OCI-LY7 (cell line): ENCODE measurements at regions of chr5 and their contacts with region 1.

Region 1: DNA sequence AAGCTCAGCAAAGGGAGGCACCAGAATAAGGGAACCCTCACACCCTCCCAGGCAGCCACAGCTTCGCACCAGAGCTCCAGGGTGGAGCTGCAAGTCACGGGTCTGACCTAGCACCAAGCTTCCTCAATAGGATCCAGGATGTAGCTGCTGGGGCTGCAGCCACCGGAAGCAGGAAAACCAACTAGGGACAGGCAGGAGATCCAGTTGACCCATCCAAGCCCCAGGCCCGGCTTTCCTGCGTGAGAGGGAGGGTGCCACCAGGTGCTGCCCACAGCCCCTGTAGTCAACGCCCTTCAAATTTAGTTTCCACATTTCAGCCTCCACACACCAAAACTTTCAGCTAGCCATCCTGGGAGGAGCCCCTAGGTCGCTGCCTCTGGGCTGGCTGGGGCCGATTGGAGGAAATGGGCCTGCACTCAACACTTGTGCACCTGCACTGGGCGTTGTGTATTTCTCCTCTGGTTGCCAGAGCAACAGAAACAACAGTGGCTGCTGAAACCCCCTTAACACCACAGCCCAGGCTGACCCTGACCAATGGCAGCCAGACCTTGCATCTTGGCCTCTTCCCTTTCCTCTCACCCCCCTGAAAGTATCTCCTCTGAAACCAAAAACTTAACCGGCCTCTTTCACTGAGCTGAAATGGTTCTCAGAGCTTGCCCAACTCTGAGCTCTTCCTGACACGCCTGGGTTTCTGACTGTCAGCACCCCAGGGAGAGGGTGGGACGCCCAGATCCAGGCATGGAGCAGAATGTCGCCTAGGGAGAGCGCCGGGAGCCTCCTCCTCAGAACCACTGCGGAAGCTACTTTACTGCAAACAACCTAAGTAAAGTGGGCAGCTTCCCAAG is 226.5 kb upstream of the MAP3K1 start:
- DNase-seq: peak; percentile 93
- H3K4me3 ChIP-seq: peak overlapping the region; percentile 6
- H3K27ac ChIP-seq: peak overlapping the region; percentile 36
- H3K4me1 ChIP-seq: peaks cover 32% of the 10 kb centered on the region
- CTCF ChIP-seq: no peak

Region 2: GRCh38 chr5:55459572-55459971 is 1129.3 kb before region 1 on chr5:
- CTCF ChIA-PET with region 1: no interaction called
- POLR2A ChIA-PET with region 1: no interaction called
- intact Hi-C with region 1: no loop called
- DNase-seq: no peak
- H3K4me3 ChIP-seq: no peak overlapping the region
- H3K27ac ChIP-seq: no peak overlapping the region
- H3K4me1 ChIP-seq: no peaks in the 10 kb centered on the region
- CTCF ChIP-seq: no peak

Region 3: GRCh38 chr5:55829956-55830355 is 758.9 kb before region 1 on chr5:
- CTCF ChIA-PET with region 1: no interaction called
- POLR2A ChIA-PET with region 1: no interaction called
- intact Hi-C with region 1: no loop called
- DNase-seq: no peak
- H3K4me3 ChIP-seq: no peak overlapping the region
- H3K27ac ChIP-seq: no peak overlapping the region
- H3K4me1 ChIP-seq: no peaks in the 10 kb centered on the region
- CTCF ChIP-seq: no peak

Region 4: DNA sequence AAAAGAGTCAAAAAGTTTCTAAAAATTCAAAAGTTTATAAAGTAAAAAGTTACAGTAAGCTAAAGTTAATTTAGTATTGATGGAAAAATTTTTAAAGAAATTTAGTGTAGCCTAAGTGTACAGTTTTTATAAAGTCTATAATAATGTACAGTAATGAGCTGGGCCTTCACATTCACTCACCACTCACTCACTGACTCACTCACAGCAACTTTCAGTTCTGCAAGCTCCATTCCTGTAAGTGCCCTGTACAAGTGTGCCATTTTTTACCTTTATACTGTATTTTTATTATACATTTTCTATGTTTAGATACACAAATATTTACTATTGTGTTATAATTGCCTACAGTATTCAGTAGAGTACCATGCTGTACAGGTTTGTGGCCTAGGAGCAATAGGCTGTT is 13.0 kb before region 1 on chr5:
- CTCF ChIA-PET with region 1: no interaction called
- POLR2A ChIA-PET with region 1: interaction called, 10 read pairs
- intact Hi-C with region 1: no loop called
- DNase-seq: no peak
- H3K4me3 ChIP-seq: no peak overlapping the region
- H3K27ac ChIP-seq: no peak overlapping the region
- H3K4me1 ChIP-seq: no peaks in the 10 kb centered on the region
- CTCF ChIP-seq: no peak

Region 5: GRCh38 chr5:56640763-56641406 is 52.0 kb after region 1 on chr5:
- CTCF ChIA-PET with region 1: no interaction called
- POLR2A ChIA-PET with region 1: no interaction called
- intact Hi-C with region 1: no loop called
- DNase-seq: peak; percentile 48
- H3K4me3 ChIP-seq: no peak overlapping the region
- H3K27ac ChIP-seq: no peak overlapping the region
- H3K4me1 ChIP-seq: peaks cover 10% of the 10 kb centered on the region
- CTCF ChIP-seq: no peak